ENCODE measurements at regions of chr3 and their contacts with region 1.

Region 1: DNA sequence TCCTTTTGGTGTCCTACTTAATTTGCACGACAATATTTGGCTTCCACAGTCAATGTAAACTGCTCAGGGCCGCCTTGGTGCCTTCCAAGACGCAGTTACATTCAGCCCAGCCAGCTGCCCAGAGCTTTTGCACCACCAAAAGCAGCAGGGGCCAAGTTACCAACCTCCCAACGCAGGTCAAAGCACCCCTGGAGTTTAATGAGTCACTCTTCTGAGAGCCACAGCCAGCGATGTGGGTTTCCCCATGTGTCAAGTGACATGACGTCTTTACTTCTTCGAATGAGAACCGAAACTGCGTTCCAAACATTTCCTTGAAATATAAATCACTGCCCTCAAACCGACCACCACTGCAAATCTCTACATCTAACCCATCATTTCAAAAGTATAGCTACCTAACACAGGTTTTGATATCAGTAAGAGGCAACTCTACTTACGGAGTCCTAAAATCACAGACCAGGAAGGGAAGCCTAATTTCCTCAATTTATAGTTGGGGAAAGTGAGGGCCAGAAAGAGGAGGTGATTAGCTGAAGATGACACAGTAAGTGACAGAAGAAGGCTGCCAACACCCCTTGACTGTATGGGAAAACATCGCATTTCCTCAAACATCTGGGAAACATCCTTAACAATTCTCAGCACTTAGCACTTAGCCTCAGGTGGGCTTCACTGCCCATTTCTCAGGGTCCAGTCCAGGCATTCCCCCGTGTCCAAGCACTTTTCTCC is 24.5 kb downstream of the MB21D2 start:
- DNase-seq: peak; percentile 94
- H3K4me3 Mint-ChIP-seq: peak overlapping the region; percentile 62
- H3K27ac Mint-ChIP-seq: peak overlapping the region; percentile 84
- H3K4me1 Mint-ChIP-seq: peaks cover 81% of the 10 kb centered on the region
- H3K27me3 Mint-ChIP-seq: peaks cover 20% of the 10 kb centered on the region

Region 2: DNA sequence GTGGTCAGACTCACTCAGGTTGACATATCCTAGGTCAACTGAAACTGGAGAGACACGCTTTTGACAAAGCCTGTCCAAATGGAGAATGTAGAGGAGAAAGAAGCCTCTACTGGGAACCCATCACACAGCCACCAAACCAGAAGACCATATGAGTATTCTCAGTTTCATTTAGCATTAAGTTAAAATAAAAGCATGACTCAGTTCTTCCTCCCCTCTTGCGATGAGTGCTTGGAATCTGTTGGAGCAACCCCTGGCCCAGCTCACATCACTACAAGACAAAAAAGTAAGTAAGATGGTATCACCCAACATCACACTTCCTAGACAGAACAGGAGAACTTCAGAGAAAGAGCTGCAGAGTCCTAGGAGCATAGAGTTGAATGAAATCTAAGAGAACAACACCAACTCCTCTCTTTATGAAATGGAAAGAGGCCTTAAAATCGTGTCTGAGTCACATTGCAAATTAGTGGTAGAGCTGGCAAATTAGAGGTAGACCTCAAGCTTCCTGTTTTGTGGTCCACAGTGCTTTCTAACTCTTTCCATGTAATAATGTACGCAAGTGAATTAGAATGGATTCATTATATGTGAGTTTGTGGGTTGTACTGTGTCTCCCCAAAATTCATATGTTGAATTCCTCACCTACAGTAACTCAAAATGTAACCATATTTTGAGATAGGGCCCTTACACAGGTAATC is 217.0 kb before region 1 on chr3:
- intact Hi-C with region 1: loop called (anchors 2 kb)
- DNase-seq: peak; percentile 57
- H3K4me3 Mint-ChIP-seq: peak overlapping the region; percentile 36
- H3K27ac Mint-ChIP-seq: peak overlapping the region; percentile 94
- H3K4me1 Mint-ChIP-seq: peaks cover 7% of the 10 kb centered on the region
- H3K27me3 Mint-ChIP-seq: peaks cover 14% of the 10 kb centered on the region

Region 3: DNA sequence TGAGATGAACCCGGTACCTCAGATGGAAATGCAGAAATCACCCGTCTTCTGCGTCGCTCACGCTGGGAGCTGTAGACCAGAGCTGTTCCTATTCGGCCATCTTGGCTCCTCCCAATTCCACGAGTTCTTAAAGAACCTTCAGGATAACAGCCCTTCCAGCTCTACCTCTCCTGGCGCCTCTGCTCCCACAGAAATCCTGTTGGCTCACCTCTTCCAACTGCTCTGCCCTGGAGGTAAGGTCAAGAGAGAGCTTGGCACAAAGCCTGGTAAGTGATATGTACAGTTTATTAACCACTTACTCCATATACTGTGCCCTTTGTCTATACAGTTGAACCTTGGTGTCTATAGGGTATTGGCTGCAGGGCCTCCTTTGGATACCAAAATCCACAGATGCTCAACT is 148.0 kb before region 1 on chr3:
- intact Hi-C with region 1: no loop called
- DNase-seq: no peak
- H3K4me3 Mint-ChIP-seq: no peak overlapping the region
- H3K27ac Mint-ChIP-seq: no peak overlapping the region
- H3K4me1 Mint-ChIP-seq: no peaks in the 10 kb centered on the region
- H3K27me3 Mint-ChIP-seq: peaks cover 2% of the 10 kb centered on the region

Region 4: DNA sequence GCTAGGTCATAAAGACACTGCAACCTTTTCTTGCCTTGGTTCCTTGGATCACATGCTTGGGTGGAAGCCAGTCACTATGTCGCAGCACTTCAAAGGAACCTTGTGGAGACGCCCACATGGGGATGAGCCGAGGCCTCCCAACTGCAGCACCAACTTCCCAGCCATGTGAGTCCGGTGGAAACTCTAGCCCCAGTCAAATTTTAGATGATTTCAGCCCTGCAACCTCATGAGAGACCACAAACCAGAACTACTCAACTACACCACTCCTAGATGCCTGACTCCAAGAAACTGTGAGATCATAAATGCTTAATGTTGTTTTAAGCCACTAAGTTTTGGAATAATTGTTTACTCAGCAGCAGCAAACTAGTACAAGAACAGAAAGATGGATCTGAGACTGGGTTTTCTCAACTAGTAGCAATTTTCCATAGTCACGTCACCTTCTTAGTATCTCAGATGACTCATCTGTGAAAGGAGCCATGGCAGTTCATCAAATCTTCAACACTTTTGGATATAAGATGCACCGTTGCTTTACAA is 62.0 kb before region 1 on chr3:
- intact Hi-C with region 1: loop called (anchors 1 kb)
- DNase-seq: peak; percentile 66
- H3K4me3 Mint-ChIP-seq: peak overlapping the region; percentile 26
- H3K27ac Mint-ChIP-seq: peak overlapping the region; percentile 83
- H3K4me1 Mint-ChIP-seq: peaks cover 39% of the 10 kb centered on the region
- H3K27me3 Mint-ChIP-seq: no peaks in the 10 kb centered on the region

Region 5: DNA sequence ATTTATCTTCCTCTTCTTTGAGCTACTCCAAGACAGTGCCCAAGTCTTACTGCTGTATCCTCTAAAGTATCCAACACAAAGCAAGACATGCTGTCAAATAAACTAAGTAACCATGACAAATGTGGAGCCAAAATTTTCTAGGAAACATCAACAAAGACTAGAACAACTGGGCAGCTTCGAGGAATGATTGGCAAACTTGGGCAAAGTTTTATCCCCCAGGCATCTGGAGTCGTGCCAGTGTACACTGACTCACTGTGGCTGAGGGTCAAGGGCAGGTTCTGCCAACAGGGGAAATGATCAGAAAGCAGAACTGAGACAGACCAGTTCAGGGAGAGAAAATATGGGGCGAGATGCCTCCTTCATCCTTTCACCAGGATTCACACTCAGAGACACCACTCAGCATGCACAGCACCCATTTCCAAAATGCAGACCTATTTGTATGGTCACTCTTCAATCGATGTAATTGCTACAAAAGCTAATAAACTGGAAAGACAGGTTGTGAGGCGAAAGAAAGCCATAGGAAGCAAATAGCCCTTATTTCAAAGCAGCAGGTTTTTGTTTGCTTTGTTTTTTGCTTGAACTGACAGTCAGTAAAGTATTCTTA is 41.2 kb before region 1 on chr3:
- intact Hi-C with region 1: loop called (anchors 1 kb)
- DNase-seq: no peak
- H3K4me3 Mint-ChIP-seq: no peak overlapping the region
- H3K27ac Mint-ChIP-seq: peak overlapping the region; percentile 27
- H3K4me1 Mint-ChIP-seq: peaks cover 45% of the 10 kb centered on the region
- H3K27me3 Mint-ChIP-seq: no peaks in the 10 kb centered on the region

Region 6: DNA sequence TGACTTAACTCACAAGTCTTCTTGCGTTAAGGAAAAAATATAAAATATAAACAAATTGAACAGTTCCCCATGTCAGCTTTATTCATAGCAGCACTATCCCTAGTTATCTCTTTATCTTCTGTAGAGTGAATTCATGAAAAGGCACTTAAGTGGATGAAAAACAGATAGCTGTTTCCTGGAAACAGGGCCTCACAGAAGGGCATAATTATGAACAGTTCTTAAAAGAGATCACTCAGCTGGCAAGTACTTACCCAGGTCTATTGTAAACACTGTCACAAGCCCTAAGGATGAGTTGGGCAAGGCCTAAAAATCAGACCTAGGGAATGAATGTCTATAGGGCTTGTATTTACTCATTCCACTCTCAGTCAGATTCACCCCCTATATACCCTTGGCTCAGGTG is 13.8 kb after region 1 on chr3:
- intact Hi-C with region 1: loop called (anchors 1 kb)
- DNase-seq: no peak
- H3K4me3 Mint-ChIP-seq: peak overlapping the region; percentile 13
- H3K27ac Mint-ChIP-seq: peak overlapping the region; percentile 79
- H3K4me1 Mint-ChIP-seq: peaks cover 37% of the 10 kb centered on the region
- H3K27me3 Mint-ChIP-seq: peaks cover 4% of the 10 kb centered on the region

Region 7: GRCh38 chr3:192986379-192986778 is 93.2 kb after region 1 on chr3:
- intact Hi-C with region 1: no loop called
- DNase-seq: no peak
- H3K4me3 Mint-ChIP-seq: no peak overlapping the region
- H3K27ac Mint-ChIP-seq: no peak overlapping the region
- H3K4me1 Mint-ChIP-seq: no peaks in the 10 kb centered on the region
- H3K27me3 Mint-ChIP-seq: peaks cover 10% of the 10 kb centered on the region

Region 8: DNA sequence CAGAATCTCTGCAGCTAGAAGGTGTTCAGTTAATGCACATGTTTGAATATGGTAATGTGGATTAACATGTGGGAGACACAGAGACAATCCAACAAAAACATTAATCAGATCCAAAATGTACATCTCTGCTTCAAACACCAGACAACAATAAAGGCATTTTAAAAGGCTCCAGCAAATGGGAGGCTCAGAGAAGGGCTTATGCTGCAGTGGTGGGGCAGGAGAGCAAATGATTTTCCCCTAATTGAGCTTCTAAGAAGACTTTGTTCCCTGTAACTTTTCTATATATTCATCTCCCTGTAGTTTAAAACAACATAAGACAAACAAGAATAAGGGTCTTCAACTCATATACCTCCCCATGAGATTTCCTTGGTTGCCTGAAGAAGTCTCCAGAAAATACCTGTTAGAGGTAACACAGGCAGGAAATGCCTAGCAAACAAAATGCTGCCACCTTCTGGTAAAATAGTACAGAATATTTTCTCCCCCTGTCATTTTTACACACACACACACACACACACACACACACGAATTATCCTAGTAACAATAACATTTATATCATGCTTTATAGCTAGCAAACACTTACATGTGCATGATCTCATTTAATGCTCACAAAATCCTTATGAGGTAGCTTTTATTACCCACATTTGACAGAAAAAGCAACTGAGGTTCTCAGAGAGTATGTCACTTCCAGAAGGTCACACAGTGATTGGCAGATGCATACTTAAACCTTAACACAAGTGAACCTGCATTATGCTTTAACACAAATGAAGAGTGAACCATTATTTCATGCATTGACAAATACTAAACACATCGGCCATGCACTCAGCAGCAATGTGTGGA is 147.9 kb after region 1 on chr3:
- intact Hi-C with region 1: loop called (anchors 1 kb)
- DNase-seq: peak; percentile 64
- H3K4me3 Mint-ChIP-seq: no peak overlapping the region
- H3K27ac Mint-ChIP-seq: peak overlapping the region; percentile 26
- H3K4me1 Mint-ChIP-seq: peaks cover 8% of the 10 kb centered on the region
- H3K27me3 Mint-ChIP-seq: peaks cover 17% of the 10 kb centered on the region

Region 9: DNA sequence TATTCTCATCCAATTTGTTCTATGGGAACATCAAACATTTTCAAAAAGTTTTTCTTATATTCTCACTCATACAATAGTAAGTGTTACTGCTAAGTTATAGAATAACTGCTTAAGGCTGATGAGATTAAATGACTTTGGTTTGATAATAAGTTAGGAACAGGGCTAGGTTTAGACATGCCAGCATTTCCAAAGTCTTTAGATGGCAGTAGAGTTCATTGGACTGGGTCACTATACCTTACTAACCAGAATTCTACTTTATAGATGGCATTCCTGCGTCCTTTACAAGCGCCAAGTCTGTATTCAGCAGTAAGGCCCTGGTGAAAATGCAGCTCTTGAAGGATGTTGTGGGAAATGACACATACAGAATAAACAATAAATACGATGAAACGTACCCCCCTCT is 369.6 kb after region 1 on chr3:
- intact Hi-C with region 1: no loop called
- DNase-seq: no peak
- H3K4me3 Mint-ChIP-seq: no peak overlapping the region
- H3K27ac Mint-ChIP-seq: no peak overlapping the region
- H3K4me1 Mint-ChIP-seq: no peaks in the 10 kb centered on the region
- H3K27me3 Mint-ChIP-seq: peaks cover 6% of the 10 kb centered on the region

Region 10: DNA sequence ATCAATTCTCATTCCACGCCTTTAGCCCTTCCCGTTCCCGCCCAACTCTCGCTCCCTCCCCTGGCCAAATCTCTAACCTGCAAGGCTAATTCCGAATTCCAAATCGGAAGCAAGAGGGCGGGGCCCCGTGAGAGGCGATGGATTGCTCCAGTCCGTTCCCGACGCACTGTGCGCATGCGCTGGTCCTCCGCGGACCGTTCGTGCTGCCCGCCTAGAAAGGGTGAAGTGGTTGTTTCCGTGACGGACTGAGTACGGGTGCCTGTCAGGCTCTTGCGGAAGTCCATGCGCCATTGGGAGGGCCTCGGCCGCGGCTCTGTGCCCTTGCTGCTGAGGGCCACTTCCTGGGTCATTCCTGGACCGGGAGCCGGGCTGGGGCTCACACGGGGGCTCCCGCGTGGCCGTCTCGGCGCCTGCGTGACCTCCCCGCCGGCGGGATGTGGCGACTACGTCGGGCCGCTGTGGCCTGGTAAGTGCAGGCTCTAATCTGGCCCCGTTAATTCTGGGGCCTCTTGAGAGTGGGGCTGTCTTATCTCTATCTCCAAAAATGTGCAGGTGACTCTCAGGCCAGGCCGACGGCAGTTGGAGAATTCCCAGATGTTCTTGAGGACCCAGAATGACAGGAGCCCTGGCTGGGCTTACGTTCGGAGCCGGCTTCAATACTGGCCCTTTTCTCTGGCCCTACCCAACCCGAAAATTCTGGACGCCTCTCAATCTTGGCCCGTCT is 700.0 kb after region 1 on chr3 and contains the start of gene OPA1:
- intact Hi-C with region 1: loop called (anchors 10 kb)
- DNase-seq: peak; percentile 98
- H3K4me3 Mint-ChIP-seq: peak within 1 kb of the TSS; percentile 98
- H3K27ac Mint-ChIP-seq: peak within 1 kb of the TSS; percentile 99
- H3K4me1 Mint-ChIP-seq: peaks cover 27% of the 10 kb centered on the region
- H3K27me3 Mint-ChIP-seq: no peaks in the 10 kb centered on the region
- total RNA-seq, gene OPA1: 91.2 and 92.2 TPM in 2 replicates